Testis (tissue), 5 donors: ENCODE measurements at regions of chr11 and their contacts with region 1.

Region 1: GRCh38 chr11:43987384-43988039 is 45.1 kb downstream of the C11orf96 start:
- DNase-seq: peak; percentile 98
- H3K4me3 ChIP-seq: no peak overlapping the region
- H3K27ac ChIP-seq: peak overlapping the region; percentile 70 to 75
- H3K4me1 ChIP-seq: peaks cover 41% of the 10 kb centered on the region
- H3K27me3 ChIP-seq: no peaks in the 10 kb centered on the region
- CTCF ChIP-seq: no peak
- POLR2A ChIP-seq: no peak

Region 2: GRCh38 chr11:44029977-44030911 is 42.7 kb after region 1 on chr11:
- intact Hi-C with region 1: loop called (anchors 5 kb)
- DNase-seq: peak; percentile 74
- H3K4me3 ChIP-seq: no peak overlapping the region
- H3K27ac ChIP-seq: peak overlapping the region; percentile 78 to 94
- H3K4me1 ChIP-seq: peaks cover 39% of the 10 kb centered on the region
- H3K27me3 ChIP-seq: no peaks in the 10 kb centered on the region
- CTCF ChIP-seq: no peak
- POLR2A ChIP-seq: no peak